ENCODE measurements at regions of chr11 and their contacts with region 1.

Region 1: GRCh38 chr11:65083834-65084597 is at the starts of genes CDCA5 and ZFPL1:
- DNase-seq: peak; percentile 97
- ATAC-seq: peak; percentile 81
- H3K4me3 Mint-ChIP-seq: peak within 1 kb of the TSS; percentile 99
- H3K27ac Mint-ChIP-seq: peak within 1 kb of the TSS; percentile 98
- H3K4me1 Mint-ChIP-seq: peaks cover 41% of the 10 kb centered on the region
- H3K27me3 Mint-ChIP-seq: no peaks in the 10 kb centered on the region
- total RNA-seq, gene CDCA5: 111 to 119 TPM
- total RNA-seq, gene ZFPL1: 24.2 to 31.8 TPM

Region 2: DNA sequence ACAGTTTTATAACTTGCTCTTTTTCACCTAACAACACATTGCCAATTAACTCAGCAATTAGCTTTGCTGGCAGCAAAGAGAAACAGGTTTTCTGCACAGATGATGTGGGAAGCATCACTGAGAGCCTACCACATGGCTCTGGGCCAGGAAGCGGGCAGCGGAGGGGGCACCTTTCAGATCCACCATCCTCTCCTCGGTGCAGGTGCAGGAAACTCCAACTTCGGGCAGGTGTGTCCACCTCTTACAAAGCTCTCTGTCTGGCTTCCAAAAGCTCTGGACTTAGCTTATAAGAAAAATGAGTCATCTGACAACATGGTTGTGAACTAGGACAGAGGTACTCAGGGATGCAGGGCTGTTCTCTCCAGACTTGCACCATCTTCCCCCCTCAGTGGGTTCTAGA is 648.0 kb before region 1 on chr11:
- CTCF ChIA-PET with region 1: no interaction called
- POLR2A ChIA-PET with region 1: no interaction called
- intact Hi-C with region 1: no loop called
- DNase-seq: no peak
- ATAC-seq: no peak
- H3K4me3 Mint-ChIP-seq: no peak overlapping the region
- H3K27ac Mint-ChIP-seq: no peak overlapping the region
- H3K4me1 Mint-ChIP-seq: no peaks in the 10 kb centered on the region
- H3K27me3 Mint-ChIP-seq: no peaks in the 10 kb centered on the region

Region 3: DNA sequence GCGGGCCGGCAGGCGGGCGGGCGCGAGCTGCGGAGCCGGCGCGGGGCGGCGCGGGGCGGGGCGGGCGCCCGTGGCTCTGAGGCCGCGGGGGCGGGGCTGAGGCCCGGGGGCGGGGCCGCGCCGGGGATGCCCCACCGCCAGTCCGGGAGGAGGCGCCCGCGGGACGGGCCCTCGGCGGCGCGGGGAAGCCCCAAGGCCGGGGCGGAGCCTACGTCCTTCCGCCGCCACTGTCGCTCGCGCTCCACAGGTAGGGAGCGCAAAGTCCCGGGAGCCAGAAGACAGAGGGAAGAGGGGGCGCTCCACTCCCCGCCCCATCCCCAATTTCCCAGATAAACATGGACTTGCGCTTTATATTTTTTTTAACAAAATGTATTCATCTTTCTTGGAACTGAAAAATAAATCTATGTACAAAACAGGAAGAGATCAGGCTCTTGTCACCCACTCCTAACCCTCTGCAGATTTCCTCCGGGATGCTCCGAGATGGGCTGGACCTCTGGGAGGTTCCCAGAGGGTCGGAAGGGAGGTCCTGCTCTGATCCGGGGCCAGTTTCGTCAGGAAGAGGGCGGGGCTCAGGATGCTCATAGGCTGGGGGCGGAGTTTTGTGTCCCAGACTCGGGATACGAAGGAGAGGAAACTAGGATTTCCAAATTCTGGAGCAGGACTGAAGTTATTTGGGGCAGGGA is 280.7 kb before region 1 on chr11 and contains the start of gene MAP4K2:
- CTCF ChIA-PET with region 1: no interaction called
- POLR2A ChIA-PET with region 1: no interaction called
- intact Hi-C with region 1: loop called in 1 of 2 experiments (anchors 1 kb)
- DNase-seq: peak; percentile 92
- ATAC-seq: peak; percentile 93
- H3K4me3 Mint-ChIP-seq: peak within 1 kb of the TSS; percentile 75
- H3K27ac Mint-ChIP-seq: peak within 1 kb of the TSS; percentile 90
- H3K4me1 Mint-ChIP-seq: peaks cover 27% of the 10 kb centered on the region
- H3K27me3 Mint-ChIP-seq: no peaks in the 10 kb centered on the region
- total RNA-seq, gene MAP4K2: 54.0 to 57.3 TPM

Region 4: GRCh38 chr11:64924102-64924851 is 159.7 kb before region 1 on chr11 and contains the start of gene PPP2R5B:
- CTCF ChIA-PET with region 1: no interaction called
- POLR2A ChIA-PET with region 1: no interaction called
- intact Hi-C with region 1: loop called in 1 of 2 experiments (anchors 1 kb)
- DNase-seq: peak; percentile 95
- ATAC-seq: peak; percentile 95
- H3K4me3 Mint-ChIP-seq: peak within 1 kb of the TSS; percentile 81
- H3K27ac Mint-ChIP-seq: peak within 1 kb of the TSS; percentile 98
- H3K4me1 Mint-ChIP-seq: peaks cover 9% of the 10 kb centered on the region
- H3K27me3 Mint-ChIP-seq: no peaks in the 10 kb centered on the region
- total RNA-seq, gene PPP2R5B: 13.2 to 13.5 TPM

Region 5: DNA sequence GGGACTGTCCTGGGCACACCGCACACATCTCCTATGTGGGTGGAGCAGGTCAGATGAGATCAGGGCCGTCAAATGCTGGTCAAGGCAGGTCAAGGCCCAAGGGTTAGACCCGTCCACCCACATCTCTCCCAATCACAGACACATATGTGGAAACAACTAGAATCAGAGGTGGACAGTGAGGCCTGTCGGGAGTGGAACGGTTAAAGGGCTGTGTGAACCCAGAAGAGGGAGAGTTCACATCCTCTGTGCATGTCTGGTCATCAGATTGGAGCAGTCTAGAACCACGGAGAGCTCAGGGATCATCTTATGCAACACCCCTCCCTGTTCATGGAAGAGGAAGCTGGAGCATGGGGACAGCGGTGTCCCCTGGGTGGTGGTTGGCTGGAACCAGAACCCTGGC is 64.2 kb before region 1 on chr11:
- CTCF ChIA-PET with region 1: no interaction called
- POLR2A ChIA-PET with region 1: no interaction called
- intact Hi-C with region 1: no loop called
- DNase-seq: no peak
- ATAC-seq: no peak
- H3K4me3 Mint-ChIP-seq: no peak overlapping the region
- H3K27ac Mint-ChIP-seq: no peak overlapping the region
- H3K4me1 Mint-ChIP-seq: peaks cover 17% of the 10 kb centered on the region
- H3K27me3 Mint-ChIP-seq: no peaks in the 10 kb centered on the region

Region 6: DNA sequence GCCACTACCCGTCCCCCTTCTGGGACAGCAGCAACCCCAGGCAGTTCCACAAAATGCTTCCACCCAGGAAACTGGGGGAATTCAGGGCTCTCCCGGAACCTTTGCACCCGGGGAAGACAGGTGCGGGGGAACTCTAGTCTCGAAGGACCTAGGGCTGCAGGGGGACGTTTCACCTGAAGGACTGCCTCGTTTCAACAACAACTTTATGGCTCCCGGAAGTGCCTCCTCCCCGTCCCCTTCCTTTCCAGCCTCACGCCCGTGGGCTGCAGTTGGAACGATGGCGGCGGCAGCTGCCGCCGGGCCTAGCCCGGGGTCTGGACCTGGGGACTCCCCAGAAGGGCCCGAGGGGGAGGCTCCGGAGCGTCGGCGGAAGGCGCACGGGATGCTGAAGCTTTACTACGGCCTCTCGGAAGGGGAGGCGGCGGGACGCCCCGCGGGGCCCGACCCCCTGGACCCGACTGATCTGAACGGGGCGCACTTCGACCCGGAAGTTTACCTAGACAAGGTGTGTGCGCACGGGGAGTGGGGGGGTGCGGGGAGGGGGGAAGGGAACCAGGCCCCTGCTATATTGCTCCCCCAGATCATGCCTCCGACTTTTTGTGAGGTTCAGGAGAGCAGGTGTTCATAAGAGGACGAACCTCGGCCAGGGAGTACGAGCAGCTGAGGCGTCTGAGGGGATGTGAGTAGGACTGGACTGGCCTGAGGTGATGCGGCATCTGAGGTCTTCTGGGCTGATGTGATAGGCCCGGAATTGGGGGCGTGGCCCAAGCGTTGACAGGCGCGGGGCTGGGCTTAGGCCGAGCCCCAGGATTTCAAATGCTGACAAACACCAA is 12.2 kb after region 1 on chr11 and contains the start of gene VPS51:
- CTCF ChIA-PET with region 1: interaction called, 5 read pairs
- POLR2A ChIA-PET with region 1: interaction called, 7 read pairs
- intact Hi-C with region 1: loop called (anchors 1 kb)
- DNase-seq: peak; percentile 93
- ATAC-seq: peak; percentile 98
- H3K4me3 Mint-ChIP-seq: peak within 1 kb of the TSS; percentile 92
- H3K27ac Mint-ChIP-seq: peak within 1 kb of the TSS; percentile 94
- H3K4me1 Mint-ChIP-seq: peaks cover 12% of the 10 kb centered on the region
- H3K27me3 Mint-ChIP-seq: no peaks in the 10 kb centered on the region
- total RNA-seq, gene VPS51: 94.3 to 123 TPM

Region 7: DNA sequence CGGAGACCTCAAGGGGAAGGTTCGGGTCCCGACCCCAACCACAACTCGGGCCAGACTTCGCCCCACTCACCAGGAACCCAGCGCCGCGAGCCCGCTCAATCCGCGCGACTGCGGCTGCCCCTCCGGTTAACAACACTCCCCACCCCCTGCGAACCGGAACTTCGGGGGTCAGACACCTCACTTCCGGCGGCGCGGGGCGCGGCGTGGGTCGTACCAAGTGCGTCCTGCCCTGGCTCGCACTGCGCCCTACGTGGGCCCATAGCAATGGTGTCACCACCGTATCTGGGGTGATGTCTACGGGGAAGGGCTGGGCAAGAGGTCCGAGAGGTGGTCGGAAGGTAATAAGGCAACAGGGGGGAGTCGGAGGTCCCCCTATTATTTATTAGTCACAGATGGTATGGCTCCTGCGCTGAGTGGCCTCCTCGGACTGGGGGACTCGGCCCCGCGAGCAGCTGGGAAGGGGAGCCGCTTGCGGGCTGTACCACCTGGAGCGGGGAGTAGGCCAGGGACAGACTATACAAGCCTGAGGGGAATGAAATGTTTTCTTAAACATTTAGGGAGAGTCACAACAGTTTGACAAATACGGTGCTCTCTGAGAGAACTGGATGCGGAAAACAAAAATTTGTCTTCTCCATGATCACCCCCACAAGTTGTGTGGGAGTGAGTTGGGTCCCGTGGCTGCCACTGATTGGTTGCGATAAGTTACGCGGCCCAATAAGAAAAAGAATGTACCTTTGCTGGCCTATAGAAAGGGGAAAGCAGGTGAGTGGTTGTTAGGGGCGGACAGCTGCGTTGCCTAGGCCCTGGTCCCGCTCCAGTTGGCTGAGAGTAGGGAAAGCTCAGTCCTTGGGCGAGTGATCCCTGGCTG is 50.6 kb after region 1 on chr11 and contains the start of gene SYVN1:
- CTCF ChIA-PET with region 1: no interaction called
- POLR2A ChIA-PET with region 1: no interaction called
- intact Hi-C with region 1: loop called in 1 of 2 experiments (anchors 1 kb)
- DNase-seq: peak; percentile 95
- ATAC-seq: peak; percentile 91
- H3K4me3 Mint-ChIP-seq: peak within 1 kb of the TSS; percentile 97
- H3K27ac Mint-ChIP-seq: peak within 1 kb of the TSS; percentile 97
- H3K4me1 Mint-ChIP-seq: peaks cover 27% of the 10 kb centered on the region
- H3K27me3 Mint-ChIP-seq: no peaks in the 10 kb centered on the region
- total RNA-seq, gene SYVN1: 24.3 to 31.1 TPM

Region 8: GRCh38 chr11:65454696-65455456 is 370.9 kb after region 1 on chr11:
- CTCF ChIA-PET with region 1: no interaction called
- POLR2A ChIA-PET with region 1: no interaction called
- intact Hi-C with region 1: no loop called
- DNase-seq: peak; percentile 91
- ATAC-seq: peak; percentile 94
- H3K4me3 Mint-ChIP-seq: peak overlapping the region; percentile 92
- H3K27ac Mint-ChIP-seq: peak overlapping the region; percentile 85
- H3K4me1 Mint-ChIP-seq: peaks cover 40% of the 10 kb centered on the region
- H3K27me3 Mint-ChIP-seq: no peaks in the 10 kb centered on the region

Measured in activated CD4-positive, alpha-beta T cell treated with anti-CD3 and anti-CD28 coated beads for 36 hours (primary cell).